Tibial artery (tissue), 4 donors: ENCODE measurements at regions of chr6 and their contacts with region 1.

Region 1: DNA sequence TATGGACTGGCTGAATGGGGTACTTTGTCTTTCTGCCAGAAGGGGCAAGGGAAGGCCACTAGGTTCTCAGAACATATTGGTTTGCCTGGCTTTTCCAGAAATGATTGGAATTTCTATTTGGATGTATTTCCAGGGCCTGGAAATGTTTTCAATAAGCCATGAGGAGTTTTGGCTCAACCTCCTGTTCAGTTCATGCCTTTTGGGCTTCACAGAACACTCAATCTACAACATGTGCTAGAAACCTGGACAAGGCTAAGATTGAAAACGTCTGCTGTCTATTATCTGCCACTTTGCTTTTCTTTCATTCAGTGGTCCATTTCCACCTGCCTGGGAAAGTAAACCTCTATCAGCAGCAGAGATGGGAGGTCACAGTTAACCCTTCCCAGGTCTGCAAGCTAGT is 793.4 kb downstream of the TENT5A start:
- DNase-seq: no peak
- H3K4me3 ChIP-seq: no peak overlapping the region
- H3K27ac ChIP-seq: no peak overlapping the region
- H3K4me1 ChIP-seq: peaks cover 0 to 13% (median 9%) of the 10 kb centered on the region in 4 donors
- H3K27me3 ChIP-seq: no peaks in the 10 kb centered on the region
- CTCF ChIP-seq: no peak

Region 2: GRCh38 chr6:79421707-79422484 is 1537.1 kb before region 1 on chr6:
- intact Hi-C with region 1: loop called (anchors 10 kb)
- DNase-seq: no peak
- H3K4me3 ChIP-seq: no peak overlapping the region
- H3K27ac ChIP-seq: no peak overlapping the region
- H3K4me1 ChIP-seq: peaks cover 0 to 6% (median 3%) of the 10 kb centered on the region in 4 donors
- H3K27me3 ChIP-seq: no peaks in the 10 kb centered on the region
- CTCF ChIP-seq: no peak

Region 3: GRCh38 chr6:81130969-81131368 is 171.9 kb after region 1 on chr6:
- intact Hi-C with region 1: no loop called
- DNase-seq: no peak
- H3K4me3 ChIP-seq: no peak overlapping the region
- H3K27ac ChIP-seq: no peak overlapping the region
- H3K4me1 ChIP-seq: no peaks in the 10 kb centered on the region
- H3K27me3 ChIP-seq: no peaks in the 10 kb centered on the region
- CTCF ChIP-seq: no peak